Posterior vena cava (tissue), 2 donors: ENCODE measurements at regions of chr2 and their contacts with region 1.

Region 1: DNA sequence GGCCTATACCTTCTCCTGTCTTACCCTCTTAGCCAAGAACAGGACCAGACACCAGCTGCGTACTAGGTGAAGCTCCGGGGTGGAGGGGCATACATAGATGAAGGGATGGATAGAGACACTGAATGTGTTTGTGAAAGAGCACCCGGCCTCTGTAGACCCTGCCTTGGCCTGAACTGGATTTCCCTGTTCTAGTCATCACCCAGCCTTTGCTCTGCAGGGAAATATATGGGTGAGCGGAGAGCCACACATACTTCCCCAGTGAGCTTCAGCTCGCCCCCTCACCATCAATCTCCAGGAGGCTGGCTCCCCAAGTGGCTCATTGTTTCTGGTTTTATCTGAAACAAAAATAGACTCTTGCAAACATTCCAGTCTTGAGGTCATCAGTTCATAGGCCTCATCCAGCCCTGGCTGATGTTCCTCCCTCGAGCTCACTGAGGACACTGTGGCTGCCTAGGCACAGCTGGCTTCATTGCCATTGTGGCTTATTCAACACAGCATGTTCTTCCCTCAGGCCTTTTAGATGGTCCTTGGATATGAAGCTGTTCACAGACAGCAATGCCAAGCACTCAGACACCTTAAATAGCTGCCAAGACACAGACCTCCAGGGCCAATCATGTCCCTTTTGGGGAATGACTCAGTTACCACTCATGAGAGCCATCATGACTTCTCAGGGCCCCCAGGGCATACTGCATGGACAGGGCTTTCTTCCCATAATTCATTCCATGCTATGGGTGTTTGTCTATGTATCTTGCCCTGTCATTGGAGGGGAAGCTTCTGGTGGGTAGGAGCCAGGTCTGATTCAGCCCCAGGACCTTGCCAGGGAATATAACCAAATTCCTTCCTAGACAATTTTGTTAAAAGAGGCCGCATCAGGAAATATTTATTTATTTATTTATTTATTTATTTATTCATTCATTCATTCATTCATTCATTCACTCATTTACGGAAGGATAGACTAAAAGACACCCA is 82.4 kb downstream of the TTC32 start:
- DNase-seq: no peak

Region 2: GRCh38 chr2:19769513-19769912 is 49.9 kb before region 1 on chr2:
- intact Hi-C with region 1: loop called in 1 of 2 experiments (anchors 1 kb)
- DNase-seq: no peak